Heart right ventricle (tissue), 16 donors: ENCODE measurements at regions of chr17 and their contacts with region 1.

Region 1: DNA sequence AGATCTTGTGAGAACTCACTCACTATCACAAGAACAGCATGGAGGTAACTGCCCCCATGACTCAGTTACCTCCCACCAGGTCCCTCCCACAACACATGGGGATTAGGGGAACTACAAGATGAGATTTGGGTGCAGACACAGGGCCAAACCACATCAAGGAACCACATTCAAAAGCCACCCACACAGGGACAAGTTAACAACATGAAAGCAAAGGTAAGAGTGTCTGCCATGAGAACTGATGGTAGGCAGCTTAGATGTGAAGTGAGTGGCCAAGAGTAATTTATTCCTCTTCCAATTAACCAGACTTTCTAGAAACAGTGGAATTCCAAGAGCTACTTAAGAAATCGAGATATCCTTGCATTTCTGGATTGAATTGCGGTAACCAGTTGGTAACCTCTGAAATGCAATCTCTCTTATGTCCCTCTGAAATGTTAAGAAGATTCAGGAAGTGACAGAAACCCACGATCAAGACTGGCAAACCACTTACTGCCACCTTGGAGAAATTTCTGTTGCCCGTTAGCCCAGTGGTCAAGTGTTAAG is 167.4 kb upstream of the CACNG5 start:
- DNase-seq: no peak
- ATAC-seq: no peak
- H3K4me3 ChIP-seq: no peak overlapping the region
- H3K27ac ChIP-seq: no peak overlapping the region
- H3K4me1 ChIP-seq: peaks cover 0 to 11% (median 9%) of the 10 kb centered on the region in 9 donors
- H3K27me3 ChIP-seq: no peaks in the 10 kb centered on the region
- CTCF ChIP-seq: no peak

Region 2: DNA sequence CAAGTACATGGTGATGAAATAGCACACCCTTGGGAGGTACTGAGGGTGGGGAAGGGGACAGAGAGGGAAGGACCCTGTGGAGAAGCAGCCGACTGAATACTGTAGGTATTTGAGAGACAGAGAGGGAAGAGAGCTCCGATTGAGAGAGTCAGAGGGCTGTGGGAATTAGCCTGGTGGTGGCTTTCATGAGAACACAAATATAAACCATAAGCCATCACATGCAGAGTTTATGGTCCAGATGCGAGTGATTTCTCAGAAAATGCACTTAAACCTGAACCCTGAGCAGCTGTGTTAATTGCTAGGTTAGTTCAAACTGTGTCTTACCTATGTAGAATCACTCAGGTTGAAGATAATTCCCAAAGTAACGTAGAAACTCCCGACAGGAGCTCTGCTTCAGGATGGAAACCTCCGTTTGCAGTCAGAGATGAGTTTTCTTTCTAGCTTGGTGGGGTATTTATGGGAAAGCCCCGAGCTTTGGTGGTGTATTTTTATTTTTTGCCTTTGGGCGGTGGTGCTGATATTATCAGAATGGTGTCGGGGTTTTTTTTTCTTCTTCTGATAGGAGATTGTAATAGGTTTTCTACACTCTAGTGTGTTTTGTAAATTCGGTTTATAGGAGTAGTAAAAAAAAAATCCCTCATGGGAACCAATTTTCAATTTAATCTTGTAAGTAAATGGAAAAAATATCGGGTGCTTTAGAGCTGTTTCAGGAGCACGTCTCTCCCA is 17.6 kb before region 1 on chr17:
- intact Hi-C with region 1: loop called in 1 of 10 experiments (anchors 2 kb)
- DNase-seq: no peak
- ATAC-seq: no peak
- H3K4me3 ChIP-seq: no peak overlapping the region
- H3K27ac ChIP-seq: no peak overlapping the region
- H3K4me1 ChIP-seq: no peaks in the 10 kb centered on the region
- H3K27me3 ChIP-seq: no peaks in the 10 kb centered on the region
- CTCF ChIP-seq: no peak